Calu3 (cell line): ENCODE measurements at regions of chr4 and their contacts with region 1.

Region 1: GRCh38 chr4:186725469-186726425 is 2.1 kb upstream of the FAT1 start:
- DNase-seq: peak; percentile 83
- H3K4me3 Mint-ChIP-seq: peak overlapping the region; percentile 83
- H3K27ac Mint-ChIP-seq: peak overlapping the region; percentile 75
- H3K4me1 Mint-ChIP-seq: peaks cover 22% of the 10 kb centered on the region
- H3K27me3 Mint-ChIP-seq: no peaks in the 10 kb centered on the region
- CTCF ChIP-seq: peak; percentile 59

Region 2: GRCh38 chr4:186765138-186765537 is 39.4 kb after region 1 on chr4:
- CTCF ChIA-PET with region 1: interaction called, 4 read pairs
- intact Hi-C with region 1: loop called (anchors 2 kb)
- DNase-seq: peak; percentile 75
- H3K4me3 Mint-ChIP-seq: peak overlapping the region; percentile 46
- H3K27ac Mint-ChIP-seq: peak overlapping the region; percentile 89
- H3K4me1 Mint-ChIP-seq: peaks cover 21% of the 10 kb centered on the region
- H3K27me3 Mint-ChIP-seq: no peaks in the 10 kb centered on the region
- CTCF ChIP-seq: no peak

Region 3: DNA sequence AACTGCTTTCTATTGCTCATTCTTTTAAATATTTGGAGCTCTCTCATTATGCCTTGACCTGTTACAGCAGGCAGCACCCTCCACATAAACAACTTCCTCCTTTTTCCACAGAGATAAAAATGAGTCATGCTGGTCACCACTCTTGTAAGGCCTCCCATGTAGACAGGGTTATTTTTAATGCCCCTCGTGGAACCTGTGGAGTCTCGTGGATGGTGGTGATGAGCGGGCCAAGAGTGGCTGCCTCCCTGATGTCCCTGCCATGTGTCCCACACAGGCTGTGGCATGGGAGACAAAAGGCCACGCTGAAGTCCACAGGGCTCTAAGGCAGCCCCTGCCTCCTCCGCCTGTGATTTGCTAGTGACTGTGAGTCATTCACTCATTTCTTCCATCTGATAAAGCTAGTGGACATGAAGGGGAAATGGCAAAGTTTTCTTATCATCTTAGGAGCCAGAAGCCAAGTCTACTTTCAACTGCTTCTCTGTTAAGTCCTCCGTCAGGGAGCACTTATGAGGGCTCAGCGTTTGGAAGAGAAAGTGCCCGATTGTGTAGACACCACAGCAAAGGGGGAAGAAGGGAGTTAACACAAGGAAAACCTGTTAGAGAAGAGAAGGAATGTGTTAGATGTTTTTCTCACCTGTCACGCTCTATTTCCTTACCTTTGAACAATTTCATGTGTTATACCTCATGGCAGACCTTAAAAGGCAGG is 119.5 kb after region 1 on chr4:
- CTCF ChIA-PET with region 1: interaction called, 4 read pairs
- intact Hi-C with region 1: loop called (anchors 2 kb)
- DNase-seq: peak; percentile 38
- H3K4me3 Mint-ChIP-seq: peak overlapping the region; percentile 65
- H3K27ac Mint-ChIP-seq: peak overlapping the region; percentile 93
- H3K4me1 Mint-ChIP-seq: peaks cover 9% of the 10 kb centered on the region
- H3K27me3 Mint-ChIP-seq: no peaks in the 10 kb centered on the region
- CTCF ChIP-seq: no peak

Region 4: DNA sequence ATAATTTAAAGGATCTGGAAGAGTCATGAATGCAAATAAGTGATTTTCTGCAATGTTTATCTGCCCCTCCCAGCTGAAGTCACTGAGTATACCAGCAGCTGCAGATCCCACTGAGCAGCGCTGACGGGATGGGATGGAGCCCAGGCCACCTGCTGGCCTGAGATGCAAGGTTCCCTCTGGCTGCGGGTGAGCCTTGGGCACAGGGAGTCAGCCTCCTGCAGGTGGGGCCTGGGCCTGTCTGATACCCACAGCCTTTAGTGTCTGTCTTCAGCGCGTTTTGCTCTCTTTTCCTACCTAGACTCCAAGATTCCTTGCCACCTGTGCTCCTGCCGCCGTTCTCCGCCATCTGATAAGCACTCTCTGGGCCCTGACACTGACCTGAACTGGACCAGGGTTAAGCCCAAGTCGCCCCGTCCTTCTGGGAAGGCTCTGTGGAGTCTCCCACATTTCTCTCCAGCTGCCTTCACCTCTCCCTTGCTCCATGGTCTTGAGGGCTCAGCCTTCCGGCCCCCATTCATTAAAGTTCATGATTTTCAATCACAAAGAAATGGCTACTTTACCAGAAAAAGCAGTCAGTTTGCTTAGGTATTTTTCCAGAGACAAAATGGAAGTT is 221.0 kb after region 1 on chr4:
- CTCF ChIA-PET with region 1: interaction called, 4 read pairs
- intact Hi-C with region 1: loop called (anchors 1 kb)
- DNase-seq: peak; percentile 77
- H3K4me3 Mint-ChIP-seq: no peak overlapping the region
- H3K27ac Mint-ChIP-seq: no peak overlapping the region
- H3K4me1 Mint-ChIP-seq: peaks cover 25% of the 10 kb centered on the region
- H3K27me3 Mint-ChIP-seq: no peaks in the 10 kb centered on the region
- CTCF ChIP-seq: peak; percentile 42